ENCODE measurements at regions of chr6 and their contacts with region 1.

Region 1: GRCh38 chr6:151390276-151391032 is 905 bp downstream of the ZBTB2 start:
- DNase-seq: peak; percentile 98
- ATAC-seq: peak; percentile 87
- H3K4me3 ChIP-seq: peak overlapping the region; percentile 88
- H3K27ac ChIP-seq: peak overlapping the region; percentile 98
- H3K4me1 ChIP-seq: peaks cover 7% of the 10 kb centered on the region
- H3K27me3 ChIP-seq: no peaks in the 10 kb centered on the region
- CTCF ChIP-seq: 0 out of 2 replicates have a peak, but pooled peaks have one; percentile 11
- POLR2A ChIP-seq: no peak
- RAD21 ChIP-seq: no peak

Region 2: GRCh38 chr6:151166196-151166595 is 224.3 kb before region 1 on chr6:
- CTCF ChIA-PET with region 1: no interaction called
- POLR2A ChIA-PET with region 1: no interaction called
- dilution Hi-C with region 1: no loop called
- in situ Hi-C with region 1: no loop called
- intact Hi-C with region 1: no loop called
- DNase-seq: no peak
- ATAC-seq: no peak
- H3K4me3 ChIP-seq: no peak overlapping the region
- H3K27ac ChIP-seq: no peak overlapping the region
- H3K4me1 ChIP-seq: no peaks in the 10 kb centered on the region
- H3K27me3 ChIP-seq: peaks cover 8% of the 10 kb centered on the region
- CTCF ChIP-seq: no peak
- POLR2A ChIP-seq: no peak
- RAD21 ChIP-seq: no peak

Region 3: DNA sequence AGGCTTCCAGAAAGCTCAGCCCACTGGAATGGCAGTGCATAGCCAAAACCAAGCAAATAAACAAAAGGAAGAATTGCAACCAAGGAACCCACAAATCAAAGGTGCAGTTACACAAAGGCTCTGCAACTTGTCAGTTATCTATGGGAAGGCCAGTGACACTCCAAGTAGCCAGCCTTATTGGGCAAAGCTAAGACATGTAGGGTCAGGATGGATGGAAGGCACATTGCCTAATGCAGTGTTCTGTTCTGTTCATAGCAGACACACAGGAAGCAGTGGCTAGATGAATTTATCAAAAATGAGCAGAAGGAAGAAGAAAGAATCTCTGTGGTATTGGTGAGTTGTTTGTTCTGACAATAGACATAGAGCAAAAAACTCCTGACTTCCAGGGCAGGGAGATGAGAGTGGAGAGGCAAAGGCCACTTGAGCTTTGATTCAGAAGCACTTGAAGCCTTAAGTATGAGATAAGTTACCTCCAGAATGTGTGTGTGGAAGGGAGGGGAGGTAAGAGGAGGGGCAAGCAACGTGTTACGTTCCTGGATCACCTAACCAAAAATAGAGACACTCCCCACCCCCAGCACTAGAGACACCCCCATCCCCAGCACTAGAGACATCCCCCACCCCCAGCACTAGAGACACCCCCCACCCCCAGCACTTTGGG is 208.6 kb before region 1 on chr6:
- CTCF ChIA-PET with region 1: no interaction called
- POLR2A ChIA-PET with region 1: no interaction called
- dilution Hi-C with region 1: no loop called
- in situ Hi-C with region 1: no loop called
- intact Hi-C with region 1: no loop called
- DNase-seq: peak; percentile 3
- ATAC-seq: no peak
- H3K4me3 ChIP-seq: no peak overlapping the region
- H3K27ac ChIP-seq: no peak overlapping the region
- H3K4me1 ChIP-seq: peaks cover 2% of the 10 kb centered on the region; the same call in 1 of the 2 replicates
- H3K27me3 ChIP-seq: peaks cover 7% of the 10 kb centered on the region
- CTCF ChIP-seq: no peak
- POLR2A ChIP-seq: no peak
- RAD21 ChIP-seq: no peak

Region 4: DNA sequence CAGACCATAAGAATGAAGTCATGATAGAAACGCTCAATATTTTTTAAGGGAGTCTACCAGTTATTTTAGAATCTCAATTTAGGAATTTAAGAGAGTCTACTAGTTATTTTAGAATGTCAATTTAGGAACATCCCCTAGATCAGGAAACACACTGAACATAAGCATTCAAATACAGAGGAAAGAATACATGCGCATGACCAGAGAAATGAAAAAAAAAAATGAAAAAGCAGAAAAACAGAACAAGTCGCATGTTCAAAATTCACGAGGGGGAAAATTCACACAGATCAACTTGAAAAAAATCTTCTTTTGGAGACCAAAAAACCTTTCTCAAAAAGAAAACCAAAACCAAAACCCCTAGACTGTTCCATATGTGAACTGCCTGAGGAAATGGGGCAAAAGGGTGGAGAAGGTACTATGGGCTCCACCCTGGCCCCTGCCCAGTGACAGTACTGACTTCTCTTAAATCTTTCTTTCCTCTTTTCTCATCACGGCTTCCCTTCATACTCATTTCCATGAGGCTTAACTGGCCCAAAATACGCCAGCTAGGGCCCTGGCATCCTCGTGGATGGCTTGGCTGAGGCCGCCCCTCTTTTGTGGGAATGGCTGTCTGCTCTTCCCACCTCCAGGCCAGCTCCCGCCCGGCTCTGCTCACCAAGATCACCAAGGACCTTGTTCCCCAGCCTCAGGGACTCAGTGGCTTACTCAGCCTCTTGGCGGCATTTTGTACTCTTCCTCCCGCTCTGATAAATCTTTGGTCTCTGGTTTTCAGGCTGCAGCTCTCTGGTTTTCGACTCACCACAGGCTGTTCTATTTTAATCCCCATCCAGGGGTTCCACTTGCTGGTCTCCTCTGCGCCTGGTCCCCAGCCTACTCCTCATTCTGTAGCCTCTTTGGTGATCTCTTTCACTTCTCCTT is 10.3 kb before region 1 on chr6:
- CTCF ChIA-PET with region 1: no interaction called
- POLR2A ChIA-PET with region 1: interaction called, 10 read pairs
- dilution Hi-C with region 1: no loop called
- in situ Hi-C with region 1: no loop called
- intact Hi-C with region 1: no loop called
- DNase-seq: no peak
- ATAC-seq: no peak
- H3K4me3 ChIP-seq: no peak overlapping the region
- H3K27ac ChIP-seq: no peak overlapping the region
- H3K4me1 ChIP-seq: no peaks in the 10 kb centered on the region; the same call in 1 of the 2 replicates
- H3K27me3 ChIP-seq: no peaks in the 10 kb centered on the region
- CTCF ChIP-seq: no peak
- POLR2A ChIP-seq: no peak
- RAD21 ChIP-seq: no peak

Region 5: GRCh38 chr6:151589667-151590066 is 199.2 kb after region 1 on chr6:
- CTCF ChIA-PET with region 1: no interaction called
- POLR2A ChIA-PET with region 1: no interaction called
- dilution Hi-C with region 1: no loop called
- in situ Hi-C with region 1: no loop called
- intact Hi-C with region 1: no loop called
- DNase-seq: no peak
- ATAC-seq: no peak
- H3K4me3 ChIP-seq: no peak overlapping the region
- H3K27ac ChIP-seq: no peak overlapping the region
- H3K4me1 ChIP-seq: no peaks in the 10 kb centered on the region
- H3K27me3 ChIP-seq: no peaks in the 10 kb centered on the region
- CTCF ChIP-seq: no peak
- POLR2A ChIP-seq: no peak
- RAD21 ChIP-seq: no peak

Region 6: DNA sequence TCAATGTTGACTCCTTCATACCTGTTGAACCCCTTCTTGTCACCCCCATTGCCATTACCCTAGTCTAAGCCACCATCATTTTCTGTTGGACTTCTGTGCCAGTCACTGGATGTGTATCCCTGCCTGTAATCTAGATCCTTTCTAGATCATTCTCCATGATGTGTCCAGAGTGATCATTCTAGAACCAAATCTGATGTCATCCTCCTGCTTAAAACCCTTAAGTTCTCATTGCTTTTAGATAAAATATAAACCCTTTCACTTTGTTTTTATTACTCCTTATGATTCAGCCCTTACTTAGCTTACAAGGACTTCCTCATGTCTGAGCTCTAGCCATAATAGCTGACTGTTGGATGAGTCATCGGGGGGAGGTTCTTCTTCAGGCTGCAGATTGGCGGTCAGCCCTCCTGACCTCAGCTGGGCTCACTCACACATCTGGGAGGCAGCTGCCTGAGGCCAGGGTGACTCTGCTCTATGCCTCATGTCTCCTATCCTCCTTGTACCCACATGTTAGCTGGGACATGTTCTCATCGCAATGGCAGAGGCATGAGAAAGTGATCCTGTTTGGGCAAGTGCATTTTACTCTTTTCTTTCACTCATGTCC is 704.6 kb after region 1 on chr6:
- CTCF ChIA-PET with region 1: no interaction called
- POLR2A ChIA-PET with region 1: no interaction called
- dilution Hi-C with region 1: no loop called
- in situ Hi-C with region 1: no loop called
- intact Hi-C with region 1: loop called (anchors 5 kb)
- DNase-seq: peak; percentile 100
- ATAC-seq: peak; percentile 88
- H3K4me3 ChIP-seq: no peak overlapping the region
- H3K27ac ChIP-seq: peak overlapping the region; percentile 87
- H3K4me1 ChIP-seq: peaks cover 27% of the 10 kb centered on the region
- H3K27me3 ChIP-seq: no peaks in the 10 kb centered on the region
- CTCF ChIP-seq: no peak
- POLR2A ChIP-seq: no peak
- RAD21 ChIP-seq: no peak